CD4-positive, alpha-beta T cell (primary cell): ENCODE measurements at regions of chr1 and their contacts with region 1.

Region 1: DNA sequence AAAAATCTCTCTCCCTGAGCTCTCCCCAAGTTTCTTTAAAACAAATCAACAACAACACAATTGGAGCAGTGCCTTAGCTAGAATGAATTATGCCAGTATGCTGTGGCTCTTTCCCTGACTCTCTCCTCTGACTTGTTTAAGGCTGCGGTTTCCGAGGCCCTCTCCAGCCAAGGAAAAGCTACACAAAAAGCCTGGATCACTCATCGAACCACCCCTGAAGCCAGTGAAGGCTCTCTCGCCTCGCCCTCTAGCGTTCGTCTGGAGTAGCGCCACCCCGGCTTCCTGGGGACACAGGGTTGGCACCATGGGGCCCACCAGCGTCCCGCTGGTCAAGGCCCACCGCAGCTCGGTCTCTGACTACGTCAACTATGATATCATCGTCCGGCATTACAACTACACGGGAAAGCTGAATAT is 1.9 kb downstream of the S1PR1 start:
- DNase-seq: peak; percentile 73 to 92 (median 86)
- ATAC-seq: peak; percentile 25
- H3K4me3 ChIP-seq: peak overlapping the region; percentile 87
- H3K4me3 Mint-ChIP-seq: peak overlapping the region; percentile 98
- H3K27ac ChIP-seq: peak overlapping the region; percentile 56 to 97
- H3K27ac Mint-ChIP-seq: peak overlapping the region; percentile 97
- H3K4me1 ChIP-seq: peaks cover 48% of the 10 kb centered on the region
- H3K4me1 Mint-ChIP-seq: peaks cover 71% of the 10 kb centered on the region
- H3K27me3 ChIP-seq: no peaks in the 10 kb centered on the region
- H3K27me3 Mint-ChIP-seq: peaks cover 3% of the 10 kb centered on the region
- CTCF ChIP-seq: peak; percentile 98

Region 2: DNA sequence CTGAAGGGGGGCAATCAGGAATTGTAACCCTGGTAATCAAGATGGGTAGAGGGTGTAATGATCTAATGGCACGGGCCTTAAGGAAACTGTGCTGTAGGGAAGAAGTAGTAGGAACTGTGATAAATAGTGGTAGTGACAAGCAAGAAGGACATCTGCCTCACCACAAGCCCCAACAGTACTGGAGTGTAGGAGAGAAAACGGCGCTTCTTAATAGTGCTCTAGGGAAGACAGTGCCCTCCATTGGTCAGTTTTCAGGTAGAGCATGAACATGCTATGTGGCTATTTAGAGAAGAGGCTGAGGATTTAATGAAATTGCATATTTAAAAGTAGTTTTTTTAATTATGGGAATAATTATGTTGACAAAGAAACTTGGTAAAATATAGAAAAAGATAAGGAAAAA is 310.6 kb before region 1 on chr1:
- CTCF ChIA-PET with region 1: interaction called, 24 read pairs
- POLR2A ChIA-PET with region 1: interaction called, 90 read pairs
- intact Hi-C with region 1: loop called (anchors 1 to 2 kb)
- DNase-seq: peak in 4 of 14 experiments; percentile 36 to 64 (median 53)
- ATAC-seq: no peak
- H3K4me3 ChIP-seq: peak overlapping the region; percentile 28
- H3K4me3 Mint-ChIP-seq: no peak overlapping the region
- H3K27ac ChIP-seq: peak overlapping the region; percentile 72 to 77
- H3K27ac Mint-ChIP-seq: no peak overlapping the region
- H3K4me1 ChIP-seq: peaks cover 46% of the 10 kb centered on the region
- H3K4me1 Mint-ChIP-seq: peaks cover 41% of the 10 kb centered on the region
- H3K27me3 ChIP-seq: no peaks in the 10 kb centered on the region
- H3K27me3 Mint-ChIP-seq: no peaks in the 10 kb centered on the region
- CTCF ChIP-seq: no peak

Region 3: DNA sequence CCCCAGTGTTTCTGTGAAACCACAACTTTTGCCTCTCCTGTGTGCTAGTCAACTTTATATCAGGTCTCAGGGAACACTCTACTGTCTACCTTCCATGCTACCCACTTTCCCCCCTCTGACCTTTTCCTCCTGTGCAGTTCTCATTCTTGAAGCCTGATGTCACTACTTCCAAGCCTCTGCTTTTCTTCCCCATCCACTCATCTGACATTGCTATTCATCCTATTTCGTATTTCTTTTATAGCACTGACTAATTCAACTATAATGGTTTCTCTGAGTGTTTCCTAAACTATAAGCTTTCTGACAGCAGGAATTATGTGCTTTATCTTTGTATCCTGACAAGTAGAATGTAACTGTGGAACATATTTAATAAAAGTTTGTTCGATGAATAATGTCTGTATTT is 194.9 kb before region 1 on chr1:
- CTCF ChIA-PET with region 1: no interaction called
- POLR2A ChIA-PET with region 1: interaction called, 5 read pairs
- intact Hi-C with region 1: loop called in 1 of 2 experiments (anchors 5 kb)
- DNase-seq: peak in 2 of 14 experiments; percentile 14 to 19
- ATAC-seq: peak; percentile 69
- H3K4me3 ChIP-seq: no peak overlapping the region
- H3K4me3 Mint-ChIP-seq: no peak overlapping the region
- H3K27ac ChIP-seq: no peak overlapping the region
- H3K27ac Mint-ChIP-seq: no peak overlapping the region
- H3K4me1 ChIP-seq: no peaks in the 10 kb centered on the region
- H3K4me1 Mint-ChIP-seq: peaks cover 12% of the 10 kb centered on the region
- H3K27me3 ChIP-seq: no peaks in the 10 kb centered on the region
- H3K27me3 Mint-ChIP-seq: no peaks in the 10 kb centered on the region
- CTCF ChIP-seq: no peak

Region 4: DNA sequence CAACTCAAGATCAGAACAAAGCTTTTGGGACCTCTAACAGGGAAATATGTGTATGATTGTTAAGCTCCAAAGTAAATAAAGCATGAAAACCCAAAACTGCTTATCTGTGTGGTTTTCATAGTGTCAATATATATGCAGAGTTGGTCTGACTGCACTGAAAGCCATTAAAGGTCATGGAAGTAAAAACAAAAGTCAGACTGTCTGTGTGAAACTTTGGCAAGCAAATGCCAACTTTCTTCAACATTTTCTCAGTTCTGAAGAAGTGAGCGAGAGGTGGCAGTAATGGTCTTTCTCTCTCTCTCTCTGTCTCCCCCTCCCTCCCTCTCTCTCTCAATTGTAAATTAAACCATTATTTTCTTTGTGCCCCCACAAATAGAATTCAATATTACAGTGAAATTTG is 101.9 kb before region 1 on chr1:
- CTCF ChIA-PET with region 1: interaction called, 19 read pairs
- POLR2A ChIA-PET with region 1: interaction called, 53 read pairs
- intact Hi-C with region 1: loop called (anchors 2 kb)
- DNase-seq: peak in 4 of 14 experiments; percentile 53 to 75 (median 64)
- ATAC-seq: peak; percentile 81
- H3K4me3 ChIP-seq: no peak overlapping the region
- H3K4me3 Mint-ChIP-seq: peak overlapping the region; percentile 40
- H3K27ac ChIP-seq: no peak overlapping the region
- H3K27ac Mint-ChIP-seq: peak overlapping the region; percentile 72
- H3K4me1 ChIP-seq: peaks cover 12% of the 10 kb centered on the region
- H3K4me1 Mint-ChIP-seq: peaks cover 65% of the 10 kb centered on the region
- H3K27me3 ChIP-seq: no peaks in the 10 kb centered on the region
- H3K27me3 Mint-ChIP-seq: no peaks in the 10 kb centered on the region
- CTCF ChIP-seq: peak; percentile 52

Region 5: GRCh38 chr1:101262630-101263348 is 24.1 kb after region 1 on chr1:
- CTCF ChIA-PET with region 1: interaction called, 26 read pairs
- POLR2A ChIA-PET with region 1: interaction called, 55 read pairs
- intact Hi-C with region 1: loop called in 1 of 2 experiments (anchors 2 kb)
- DNase-seq: peak in 5 of 14 experiments; percentile 12 to 87 (median 61)
- ATAC-seq: peak; percentile 55
- H3K4me3 ChIP-seq: peak overlapping the region; percentile 25
- H3K4me3 Mint-ChIP-seq: peak overlapping the region; percentile 83
- H3K27ac ChIP-seq: peak overlapping the region in 1 of 2 donors; percentile 12
- H3K27ac Mint-ChIP-seq: peak overlapping the region; percentile 88
- H3K4me1 ChIP-seq: peaks cover 80% of the 10 kb centered on the region
- H3K4me1 Mint-ChIP-seq: peaks cover 85% of the 10 kb centered on the region
- H3K27me3 ChIP-seq: no peaks in the 10 kb centered on the region
- H3K27me3 Mint-ChIP-seq: no peaks in the 10 kb centered on the region
- CTCF ChIP-seq: no peak

Region 6: DNA sequence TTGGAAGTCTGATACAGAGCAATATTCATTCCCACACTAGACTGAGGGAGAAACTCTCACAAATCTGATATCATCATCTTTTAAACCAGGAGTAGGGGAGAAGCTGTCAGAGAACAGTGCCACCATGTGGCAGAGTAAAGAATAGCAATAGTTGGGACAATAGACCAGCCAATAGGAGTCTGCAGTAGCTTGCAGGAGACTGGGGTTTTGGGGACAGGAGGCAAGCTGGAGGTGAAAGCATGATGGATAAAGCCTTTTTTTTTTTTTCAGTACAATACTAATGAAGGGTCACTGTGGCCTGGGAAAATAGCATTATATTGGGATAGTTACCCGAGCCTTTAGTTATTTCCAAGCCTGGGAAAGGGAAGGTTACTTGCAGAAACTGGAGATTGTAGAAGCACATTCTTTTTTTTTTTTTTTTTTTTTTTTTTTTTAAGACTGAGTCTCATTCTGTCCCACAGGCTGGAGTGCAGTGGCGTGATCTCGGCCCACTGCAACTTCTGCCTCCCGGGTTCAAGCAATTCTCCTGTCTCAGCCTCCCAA is 118.8 kb after region 1 on chr1:
- CTCF ChIA-PET with region 1: interaction called, 5 read pairs
- POLR2A ChIA-PET with region 1: interaction called, 7 read pairs
- intact Hi-C with region 1: loop called (anchors 5 kb)
- DNase-seq: peak; percentile 43 to 92 (median 60)
- ATAC-seq: peak; percentile 100
- H3K4me3 ChIP-seq: no peak overlapping the region
- H3K4me3 Mint-ChIP-seq: no peak overlapping the region
- H3K27ac ChIP-seq: no peak overlapping the region
- H3K27ac Mint-ChIP-seq: peak overlapping the region; percentile 5
- H3K4me1 ChIP-seq: peaks cover 7% of the 10 kb centered on the region
- H3K4me1 Mint-ChIP-seq: peaks cover 9% of the 10 kb centered on the region
- H3K27me3 ChIP-seq: no peaks in the 10 kb centered on the region
- H3K27me3 Mint-ChIP-seq: no peaks in the 10 kb centered on the region
- CTCF ChIP-seq: peak; percentile 84

Region 7: GRCh38 chr1:101463195-101463594 is 224.5 kb after region 1 on chr1:
- CTCF ChIA-PET with region 1: no interaction called
- POLR2A ChIA-PET with region 1: no interaction called
- intact Hi-C with region 1: no loop called
- DNase-seq: no peak
- ATAC-seq: no peak
- H3K4me3 ChIP-seq: no peak overlapping the region
- H3K4me3 Mint-ChIP-seq: no peak overlapping the region
- H3K27ac ChIP-seq: no peak overlapping the region
- H3K27ac Mint-ChIP-seq: no peak overlapping the region
- H3K4me1 ChIP-seq: no peaks in the 10 kb centered on the region
- H3K4me1 Mint-ChIP-seq: no peaks in the 10 kb centered on the region
- H3K27me3 ChIP-seq: no peaks in the 10 kb centered on the region
- H3K27me3 Mint-ChIP-seq: no peaks in the 10 kb centered on the region
- CTCF ChIP-seq: no peak